A549 (cell line): ENCODE measurements at regions of chr3 and their contacts with region 1.

Region 1: GRCh38 chr3:126995926-126996512 is 13.1 kb downstream of the PLXNA1 start:
- DNase-seq: no peak
- ATAC-seq: peak in 1 of 2 experiments; percentile 57; a peak in 3 of 6 replicates
- H3K4me3 ChIP-seq: no peak overlapping the region
- H3K27ac ChIP-seq: no peak overlapping the region
- H3K4me1 ChIP-seq: no peaks in the 10 kb centered on the region
- CTCF ChIP-seq: no peak
- EP300 ChIP-seq: no peak
- POLR2A ChIP-seq: no peak
- RAD21 ChIP-seq: no peak

Region 2: DNA sequence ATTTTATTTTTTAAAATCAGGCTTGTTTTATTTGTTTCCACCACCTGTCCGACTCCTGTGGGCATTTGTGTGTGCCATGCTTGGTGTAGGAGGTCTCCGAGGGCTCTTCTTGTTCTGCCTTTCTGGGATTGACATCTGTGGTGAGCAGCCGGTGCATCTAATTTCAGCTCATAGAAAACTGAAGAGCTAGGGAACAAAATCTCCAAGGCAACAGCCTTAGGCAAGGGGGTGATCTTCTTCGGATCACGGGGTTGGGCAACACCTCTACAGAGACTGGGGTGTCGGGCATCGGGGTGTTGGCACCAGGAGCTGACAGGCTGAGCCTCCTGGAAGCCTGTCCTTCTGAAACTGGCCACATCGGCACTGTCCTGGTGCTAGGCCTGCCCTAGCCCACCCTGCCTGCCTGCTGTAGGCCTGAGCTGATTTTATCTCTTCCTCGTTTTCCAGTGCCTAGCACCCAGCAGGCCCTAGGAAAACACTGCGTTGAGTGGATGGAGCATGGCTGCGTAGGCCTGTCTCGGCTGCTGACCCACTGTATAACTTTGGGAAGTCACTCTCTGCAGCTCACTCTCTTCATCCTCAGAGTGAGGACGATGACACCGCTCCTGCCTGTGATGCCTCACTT is 281.6 kb before region 1 on chr3:
- CTCF ChIA-PET with region 1: no interaction called
- POLR2A ChIA-PET with region 1: no interaction called
- DNase-seq: no peak
- ATAC-seq: no peak
- H3K4me3 ChIP-seq: no peak overlapping the region
- H3K27ac ChIP-seq: no peak overlapping the region
- H3K4me1 ChIP-seq: no peaks in the 10 kb centered on the region
- CTCF ChIP-seq: no peak
- EP300 ChIP-seq: no peak
- POLR2A ChIP-seq: no peak
- RAD21 ChIP-seq: no peak

Region 3: GRCh38 chr3:126982471-126983175 is 13.4 kb before region 1 on chr3 and contains the start of gene PLXNA1:
- CTCF ChIA-PET with region 1: interaction called, 10 read pairs
- POLR2A ChIA-PET with region 1: no interaction called
- DNase-seq: peak; percentile 66 to 81
- ATAC-seq: peak; percentile 83 to 87
- H3K4me3 ChIP-seq: peak within 1 kb of the TSS; percentile 85
- H3K27ac ChIP-seq: peak within 1 kb of the TSS; percentile 96 to 97
- H3K4me1 ChIP-seq: peaks cover 17% of the 10 kb centered on the region
- CTCF ChIP-seq: peak; percentile 85
- EP300 ChIP-seq: no peak
- POLR2A ChIP-seq: peak; percentile 49
- RAD21 ChIP-seq: peak; percentile 27 to 53; a peak in 3 of 5 replicates
- polyA plus RNA-seq, gene PLXNA1: 9.1 and 10.9 TPM in 2 replicates